Ascending aorta (tissue), 2 donors: ENCODE measurements at regions of chr17 and their contacts with region 1.

Region 1: GRCh38 chr17:45021607-45022287 is 29.7 kb downstream of the DCAKD start:
- DNase-seq: peak in 1 of 2 donors; percentile 76
- H3K4me3 ChIP-seq: peak overlapping the region; percentile 46 to 68
- H3K27ac ChIP-seq: peak overlapping the region; percentile 7 to 83
- H3K4me1 ChIP-seq: peaks cover 5 to 21% of the 10 kb centered on the region in 2 donors
- H3K27me3 ChIP-seq: no peaks in the 10 kb centered on the region
- CTCF ChIP-seq: peak; percentile 64 to 97 (median 70)

Region 2: DNA sequence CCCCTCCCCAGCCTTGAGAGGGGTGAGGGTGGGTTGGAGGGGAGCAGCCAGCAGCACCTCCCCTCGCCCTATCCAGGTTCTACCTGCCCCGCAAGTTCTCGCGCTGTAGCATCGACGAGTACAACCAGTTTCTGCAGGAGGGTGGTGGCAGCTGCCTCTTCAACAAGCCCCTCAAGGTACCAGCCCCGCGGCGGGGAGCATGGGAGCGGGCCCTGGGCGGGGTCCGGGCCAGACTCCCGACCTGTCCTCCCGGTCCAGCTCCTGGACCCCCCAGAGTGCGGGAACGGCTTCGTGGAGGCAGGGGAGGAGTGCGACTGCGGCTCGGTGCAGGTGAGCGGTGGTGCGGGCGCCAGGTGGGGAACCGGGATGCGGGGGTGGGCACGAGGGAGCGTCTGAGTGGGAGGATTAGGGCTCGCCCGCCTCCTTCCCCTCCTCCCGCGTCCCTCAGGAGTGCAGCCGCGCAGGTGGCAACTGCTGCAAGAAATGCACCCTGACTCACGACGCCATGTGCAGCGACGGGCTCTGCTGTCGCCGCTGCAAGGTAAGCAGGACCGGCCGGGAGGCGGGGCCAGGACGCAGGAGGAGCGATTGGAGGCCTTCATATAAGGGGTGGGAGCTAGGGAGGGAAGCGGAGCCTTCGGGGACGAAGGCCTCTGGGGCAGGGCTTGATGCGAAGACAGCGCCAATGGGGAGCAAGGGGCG is 246.5 kb before region 1 on chr17:
- intact Hi-C with region 1: loop called (anchors 1 kb)
- DNase-seq: peak; percentile 91 to 98
- H3K4me3 ChIP-seq: peak overlapping the region; percentile 54 to 73
- H3K27ac ChIP-seq: peak overlapping the region in 1 of 2 donors; percentile 1
- H3K4me1 ChIP-seq: peaks cover 10 to 14% of the 10 kb centered on the region in 2 donors
- H3K27me3 ChIP-seq: no peaks in the 10 kb centered on the region
- CTCF ChIP-seq: no peak

Region 3: DNA sequence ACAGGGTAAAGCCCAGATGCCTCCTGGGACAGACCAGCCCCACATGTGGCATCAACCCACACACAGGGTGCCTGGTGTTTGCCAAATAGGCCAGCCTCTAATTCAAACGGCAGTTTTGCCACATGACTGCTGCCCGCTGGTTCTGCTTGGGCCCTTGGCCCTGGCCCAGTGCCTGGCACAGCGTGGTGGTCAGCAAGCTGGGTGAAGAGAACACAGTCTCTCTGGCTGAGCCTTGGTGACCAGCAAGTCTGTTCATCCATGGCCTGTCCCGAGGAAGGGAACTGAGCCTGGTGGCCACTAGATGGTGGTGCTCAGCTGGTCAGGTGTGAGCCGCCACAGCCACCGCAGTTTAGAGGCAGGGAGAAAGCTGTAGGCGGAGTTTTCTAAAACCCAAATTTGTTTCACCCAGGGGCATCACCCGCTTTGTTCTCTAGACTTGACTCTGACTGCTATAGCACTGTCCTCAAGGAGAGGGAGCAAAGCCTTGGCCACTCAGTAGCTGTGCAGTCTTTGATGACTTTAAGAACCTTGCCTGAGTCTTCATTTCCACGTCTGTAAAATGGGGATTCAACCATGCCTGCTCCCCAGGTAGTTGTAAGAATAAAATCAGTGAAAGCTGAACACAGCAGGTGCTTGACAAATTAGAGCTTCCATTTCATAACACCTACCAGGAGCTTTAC is 101.7 kb before region 1 on chr17:
- intact Hi-C with region 1: loop called (anchors 1 kb)
- DNase-seq: peak; percentile 54 to 90
- H3K4me3 ChIP-seq: no peak overlapping the region
- H3K27ac ChIP-seq: peak overlapping the region in 1 of 2 donors; percentile 30
- H3K4me1 ChIP-seq: peaks cover 12 to 24% of the 10 kb centered on the region in 2 donors
- H3K27me3 ChIP-seq: no peaks in the 10 kb centered on the region
- CTCF ChIP-seq: peak; percentile 82 to 90 (median 89)

Region 4: GRCh38 chr17:44968226-44969143 is 53.3 kb before region 1 on chr17 and contains the start of gene C1QL1:
- intact Hi-C with region 1: loop called (anchors 2 kb)
- DNase-seq: peak; percentile 45 to 94
- H3K4me3 ChIP-seq: peak within 1 kb of the TSS; percentile 27 to 53
- H3K27ac ChIP-seq: no peak within 1 kb of the TSS
- H3K4me1 ChIP-seq: peaks cover 10 to 15% of the 10 kb centered on the region in 2 donors
- H3K27me3 ChIP-seq: peaks cover 9% of the 10 kb centered on the region
- CTCF ChIP-seq: no peak
- total RNA-seq, gene C1QL1: not detected

Region 5: GRCh38 chr17:45092932-45093430 is 71.2 kb after region 1 on chr17:
- intact Hi-C with region 1: no loop called
- DNase-seq: peak; percentile 81 to 97
- H3K4me3 ChIP-seq: peak overlapping the region in 1 of 2 donors; percentile 8
- H3K27ac ChIP-seq: peak overlapping the region; percentile 87 to 94
- H3K4me1 ChIP-seq: peaks cover 41 to 80% of the 10 kb centered on the region in 2 donors
- H3K27me3 ChIP-seq: no peaks in the 10 kb centered on the region
- CTCF ChIP-seq: no peak

Region 6: DNA sequence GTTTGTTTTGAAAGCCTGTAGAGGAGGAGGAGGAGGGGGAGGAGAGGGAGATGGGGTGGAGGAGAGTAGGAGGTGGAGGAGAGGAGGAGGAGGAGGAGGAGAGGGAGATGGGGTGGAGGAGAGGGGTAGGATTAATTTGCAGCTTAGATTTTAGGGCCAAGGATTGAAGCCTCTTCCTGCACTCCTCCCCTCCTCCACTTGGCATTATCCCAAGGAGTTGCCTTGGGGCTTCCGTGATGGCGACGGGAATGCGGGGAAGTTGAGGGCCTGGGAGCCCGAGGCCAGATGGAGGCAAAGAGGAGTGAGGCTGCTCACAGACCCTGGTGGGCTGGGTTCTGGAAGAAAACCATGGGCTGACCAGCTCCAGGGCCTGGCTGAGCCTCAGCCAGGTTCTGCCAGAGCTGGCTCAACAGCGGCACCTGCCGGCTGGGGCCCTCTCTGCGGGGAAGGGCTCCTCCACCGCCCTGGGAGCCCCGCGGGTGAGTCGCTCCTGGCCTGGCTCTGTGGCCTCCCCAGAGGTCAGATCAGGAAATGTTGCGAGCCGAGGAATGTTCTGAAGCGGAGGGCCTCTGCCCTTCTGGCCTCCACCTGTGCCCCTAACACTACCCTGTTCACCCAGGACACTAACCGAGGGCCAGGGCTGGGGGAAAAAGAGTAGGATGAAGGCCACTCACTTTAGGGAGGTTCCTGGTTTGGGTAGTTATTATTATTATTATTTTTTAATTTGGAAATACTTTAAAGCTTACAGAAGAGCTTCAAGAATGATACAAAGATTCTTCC is 176.0 kb after region 1 on chr17:
- intact Hi-C with region 1: loop called (anchors 5 kb)
- DNase-seq: peak; percentile 55 to 96
- H3K4me3 ChIP-seq: peak overlapping the region in 1 of 2 donors; percentile 38
- H3K27ac ChIP-seq: peak overlapping the region in 1 of 2 donors; percentile 26
- H3K4me1 ChIP-seq: peaks cover 0 to 4% of the 10 kb centered on the region in 2 donors
- H3K27me3 ChIP-seq: no peaks in the 10 kb centered on the region
- CTCF ChIP-seq: peak; percentile 99 to 100 (median 99)

Region 7: DNA sequence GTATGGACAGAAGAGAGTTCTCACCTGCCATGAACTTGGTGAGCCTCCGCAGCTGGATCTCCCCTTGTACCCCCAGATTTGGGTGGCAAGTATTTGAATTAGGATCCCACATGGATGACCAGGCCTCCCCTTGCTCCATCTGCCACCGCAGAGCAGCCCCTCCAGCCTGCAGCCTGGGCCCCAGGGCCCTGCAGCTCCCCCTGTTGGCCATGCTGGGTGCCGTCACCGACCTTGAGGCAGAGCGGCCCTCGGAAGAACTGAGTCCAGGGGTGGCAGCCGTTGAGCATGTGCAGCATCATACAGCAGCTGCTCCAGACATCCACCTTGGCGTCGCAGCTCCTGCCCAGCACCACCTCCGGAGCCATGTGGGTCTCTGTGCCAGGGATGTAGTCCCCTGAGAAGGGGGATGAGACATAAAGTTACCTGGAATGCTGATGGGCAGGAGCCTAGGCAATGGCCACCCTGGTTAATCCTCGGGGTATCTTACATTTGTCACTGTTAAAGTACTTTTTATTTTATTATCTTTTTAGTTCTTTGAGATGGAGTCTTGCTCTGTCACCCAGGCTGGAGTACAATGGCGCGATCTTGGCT is 249.2 kb after region 1 on chr17:
- intact Hi-C with region 1: no loop called
- DNase-seq: no peak
- H3K4me3 ChIP-seq: no peak overlapping the region
- H3K27ac ChIP-seq: no peak overlapping the region
- H3K4me1 ChIP-seq: no peaks in the 10 kb centered on the region
- H3K27me3 ChIP-seq: no peaks in the 10 kb centered on the region
- CTCF ChIP-seq: peak in 2 of 3 experiments; percentile 25 to 35

Region 8: DNA sequence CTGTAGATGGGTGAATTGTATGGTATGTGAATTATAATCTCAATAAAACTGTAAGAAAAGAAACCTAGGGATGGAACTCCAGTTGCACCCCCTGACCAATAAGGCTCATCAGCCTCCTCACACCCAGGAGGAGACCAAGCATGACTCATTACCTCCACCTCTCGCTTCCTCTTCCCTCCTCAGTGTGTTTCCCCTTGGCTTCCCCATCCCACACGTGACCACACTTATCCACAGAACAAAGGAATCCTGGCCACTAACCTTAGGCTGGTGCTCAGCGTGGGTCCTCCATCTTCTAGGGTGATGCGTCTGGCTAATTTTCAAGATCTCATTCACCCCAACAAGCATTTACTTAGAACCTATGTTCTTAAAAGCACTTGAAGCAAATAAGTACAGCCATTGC is 331.3 kb after region 1 on chr17:
- intact Hi-C with region 1: no loop called
- DNase-seq: peak in 1 of 2 donors; percentile 48
- H3K4me3 ChIP-seq: no peak overlapping the region
- H3K27ac ChIP-seq: no peak overlapping the region
- H3K4me1 ChIP-seq: no peaks in the 10 kb centered on the region
- H3K27me3 ChIP-seq: no peaks in the 10 kb centered on the region
- CTCF ChIP-seq: no peak